Head of caudate nucleus (tissue), 42 donors: ENCODE measurements at regions of chr17 and their contacts with region 1.

Region 1: DNA sequence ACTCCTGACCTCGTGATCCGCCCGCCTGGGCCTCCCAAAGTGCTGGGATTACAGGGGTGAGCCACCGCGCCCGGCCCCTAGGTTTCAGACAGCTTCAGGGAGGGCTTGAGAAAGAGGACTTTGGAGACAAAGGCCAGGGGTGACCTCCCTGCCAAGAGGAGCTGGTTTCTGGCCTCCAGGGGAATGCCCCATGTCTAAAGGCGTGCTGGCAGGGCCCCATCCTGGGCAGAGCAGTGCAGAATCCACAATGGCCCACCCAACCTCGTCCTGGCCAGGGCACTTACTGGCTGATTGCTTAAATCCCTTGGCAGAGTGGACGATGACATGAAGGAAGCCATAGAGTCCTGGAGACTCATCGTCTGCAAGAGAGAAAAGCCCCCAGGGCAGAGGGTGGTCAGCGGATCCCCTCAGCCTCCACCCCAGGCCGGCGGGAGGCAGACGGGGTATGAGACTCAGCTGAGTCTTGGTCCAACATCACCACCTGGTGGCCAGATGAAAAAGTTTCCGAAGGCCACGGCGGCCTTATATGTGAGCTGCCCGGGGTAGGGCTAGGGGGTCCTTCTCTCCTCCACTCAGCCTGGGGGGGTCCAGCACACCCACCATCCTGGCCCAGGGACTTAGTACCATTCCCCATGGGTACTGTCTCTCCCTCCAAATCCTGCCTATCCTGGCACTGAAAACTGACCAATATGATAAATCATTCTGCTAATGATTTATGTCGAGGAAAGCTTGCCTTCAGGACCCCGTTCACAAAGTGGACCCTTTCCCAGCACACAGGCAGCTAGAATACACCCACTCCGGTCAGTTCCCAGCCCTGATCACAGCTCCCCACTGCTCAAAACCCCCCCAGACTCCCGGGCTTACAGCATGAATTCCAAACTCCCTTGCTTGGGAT is 59.1 kb downstream of the TIMM22 start:
- DNase-seq: peak in 41 of 42 donors; percentile 48 to 90 (median 73)

Region 2: DNA sequence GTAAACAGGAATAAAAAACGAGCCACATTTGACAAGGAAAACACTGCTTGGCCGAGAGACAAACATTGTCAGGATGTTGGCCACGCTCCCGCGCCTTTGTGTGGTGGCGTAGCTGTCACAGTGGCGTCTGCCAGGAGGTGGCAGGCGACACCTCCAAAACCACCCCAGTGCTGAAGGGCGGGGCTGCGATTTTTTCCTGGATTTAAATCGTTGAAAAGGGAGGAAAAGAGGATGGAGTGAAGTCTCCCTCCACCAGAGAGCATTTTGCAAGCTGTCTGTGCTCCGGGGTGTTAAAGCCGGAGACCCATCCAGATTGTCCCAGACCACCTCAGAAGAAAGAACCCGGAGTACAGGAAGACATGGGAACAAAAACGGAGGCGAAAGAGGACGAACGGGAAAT is 261.1 kb before region 1 on chr17:
- intact Hi-C with region 1: loop called (anchors 10 kb)
- DNase-seq: peak; percentile 77 to 94 (median 88)

Region 3: GRCh38 chr17:996554-997344 is 59.2 kb before region 1 on chr17 and contains the start of gene TIMM22:
- intact Hi-C with region 1: loop called (anchors 5 kb)
- DNase-seq: peak; percentile 85 to 97 (median 93)